ENCODE measurements at regions of chr3 and their contacts with region 1.

Region 1: GRCh38 chr3:119676771-119677640 is at the start of gene COX17:
- H3K4me3 Mint-ChIP-seq: peak within 1 kb of the TSS; percentile 94
- H3K27ac Mint-ChIP-seq: peak within 1 kb of the TSS; percentile 99
- H3K4me1 Mint-ChIP-seq: peaks cover 34% of the 10 kb centered on the region
- H3K27me3 Mint-ChIP-seq: no peaks in the 10 kb centered on the region

Region 2: DNA sequence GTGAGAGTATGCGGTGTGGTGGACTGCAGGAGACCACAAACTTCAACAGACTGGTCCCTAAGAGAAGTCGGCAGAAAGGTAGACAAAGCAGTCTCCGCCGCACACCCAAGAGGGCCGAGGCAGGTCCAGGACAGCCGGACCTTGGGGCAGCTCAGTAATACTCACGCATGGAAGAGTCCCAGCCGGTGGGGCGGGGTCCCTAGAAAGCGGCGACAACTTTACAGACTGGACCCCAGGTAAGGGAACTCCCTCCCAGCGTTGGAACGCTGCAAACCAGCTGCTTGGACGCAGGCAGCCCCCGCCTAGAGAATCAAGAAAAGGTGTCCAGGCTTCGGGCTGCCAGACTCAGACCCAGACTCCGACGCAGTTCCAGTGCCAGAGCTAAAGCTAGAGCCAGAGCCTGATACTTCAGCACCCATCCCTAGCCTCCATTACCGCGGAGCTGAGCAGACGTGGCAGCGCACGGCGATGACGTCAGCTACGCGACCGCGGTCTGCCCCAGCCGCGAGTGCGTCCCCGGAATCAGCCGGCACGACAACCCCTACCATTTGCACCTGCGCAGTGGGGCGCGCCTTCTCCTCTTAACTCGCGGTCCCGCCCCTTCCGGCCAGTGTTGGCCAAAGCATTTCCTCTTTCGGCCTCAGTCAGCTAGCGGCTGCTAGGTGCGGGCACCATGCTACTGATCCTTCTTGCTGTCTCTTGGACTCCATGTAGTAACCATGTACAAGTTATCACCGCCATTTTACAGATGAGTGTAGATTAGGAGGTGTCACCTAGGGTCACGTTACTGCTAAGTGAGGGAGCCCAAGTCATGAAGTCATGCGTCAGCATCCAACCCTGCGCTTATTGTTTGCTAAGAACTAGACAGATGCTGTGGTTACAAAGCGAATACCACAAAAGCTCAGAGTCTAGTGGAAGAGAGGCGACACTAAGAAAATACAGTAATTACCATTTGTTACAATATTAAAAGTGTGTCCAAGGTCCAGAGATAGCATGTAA is 213.5 kb before region 1 on chr3 and contains the start of gene TMEM39A:
- intact Hi-C with region 1: loop called (anchors 10 kb)
- H3K4me3 Mint-ChIP-seq: peak within 1 kb of the TSS; percentile 95
- H3K27ac Mint-ChIP-seq: peak within 1 kb of the TSS; percentile 96
- H3K4me1 Mint-ChIP-seq: peaks cover 44% of the 10 kb centered on the region
- H3K27me3 Mint-ChIP-seq: no peaks in the 10 kb centered on the region

Region 3: GRCh38 chr3:119524931-119525662 is 151.9 kb before region 1 on chr3:
- intact Hi-C with region 1: loop called (anchors 10 kb)
- H3K4me3 Mint-ChIP-seq: no peak overlapping the region
- H3K27ac Mint-ChIP-seq: peak overlapping the region; percentile 51
- H3K4me1 Mint-ChIP-seq: peaks cover 39% of the 10 kb centered on the region
- H3K27me3 Mint-ChIP-seq: no peaks in the 10 kb centered on the region

Region 4: DNA sequence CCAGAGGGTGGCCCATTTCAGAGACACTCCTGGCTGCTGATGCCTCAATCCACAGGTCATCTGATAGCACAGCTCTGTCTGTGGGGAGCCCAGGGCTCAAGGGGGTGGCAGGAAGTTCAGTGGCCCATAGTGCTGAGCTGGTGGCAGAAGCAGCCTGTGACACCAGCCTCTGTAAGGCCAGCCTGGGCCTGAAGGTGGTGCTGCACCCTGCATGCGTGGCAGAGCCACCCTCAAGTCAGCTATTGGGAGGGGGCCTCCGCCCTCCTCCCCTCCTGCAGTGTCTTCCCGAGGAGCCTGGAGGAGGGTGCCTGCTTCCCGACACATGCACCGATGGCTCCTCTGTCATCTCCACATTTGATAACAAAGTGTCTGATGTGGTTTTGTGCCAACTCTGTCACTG is 76.3 kb before region 1 on chr3:
- intact Hi-C with region 1: loop called (anchors 2 kb)
- H3K4me3 Mint-ChIP-seq: no peak overlapping the region
- H3K27ac Mint-ChIP-seq: peak overlapping the region; percentile 44
- H3K4me1 Mint-ChIP-seq: peaks cover 64% of the 10 kb centered on the region
- H3K27me3 Mint-ChIP-seq: no peaks in the 10 kb centered on the region

Region 5: GRCh38 chr3:119700269-119700919 is 23.4 kb after region 1 on chr3:
- intact Hi-C with region 1: no loop called
- H3K4me3 Mint-ChIP-seq: no peak overlapping the region
- H3K27ac Mint-ChIP-seq: peak overlapping the region; percentile 87
- H3K4me1 Mint-ChIP-seq: peaks cover 33% of the 10 kb centered on the region
- H3K27me3 Mint-ChIP-seq: peaks cover 14% of the 10 kb centered on the region